ENCODE measurements at regions of chr11 and their contacts with region 1.

Region 1: GRCh38 chr11:5808500-5809121 is at the start of gene OR52N2:
- DNase-seq: no peak
- H3K4me3 ChIP-seq: peak within 1 kb of the TSS; percentile 30 to 42
- H3K27ac ChIP-seq: no peak within 1 kb of the TSS
- H3K4me1 ChIP-seq: no peaks in the 10 kb centered on the region
- H3K27me3 ChIP-seq: no peaks in the 10 kb centered on the region
- CTCF ChIP-seq: peak; percentile 65 to 79 (median 77)
- POLR2A ChIP-seq: no peak
- total RNA-seq, gene OR52N2: not detected

Region 2: GRCh38 chr11:5476184-5476819 is 332.3 kb before region 1 on chr11:
- intact Hi-C with region 1: loop called (anchors 10 kb)
- DNase-seq: no peak
- H3K4me3 ChIP-seq: no peak overlapping the region
- H3K27ac ChIP-seq: no peak overlapping the region
- H3K4me1 ChIP-seq: no peaks in the 10 kb centered on the region
- H3K27me3 ChIP-seq: no peaks in the 10 kb centered on the region
- CTCF ChIP-seq: peak in 2 of 3 experiments; percentile 26 to 54
- POLR2A ChIP-seq: no peak